ENCODE measurements at regions of chr10 and their contacts with region 1.

Region 1: DNA sequence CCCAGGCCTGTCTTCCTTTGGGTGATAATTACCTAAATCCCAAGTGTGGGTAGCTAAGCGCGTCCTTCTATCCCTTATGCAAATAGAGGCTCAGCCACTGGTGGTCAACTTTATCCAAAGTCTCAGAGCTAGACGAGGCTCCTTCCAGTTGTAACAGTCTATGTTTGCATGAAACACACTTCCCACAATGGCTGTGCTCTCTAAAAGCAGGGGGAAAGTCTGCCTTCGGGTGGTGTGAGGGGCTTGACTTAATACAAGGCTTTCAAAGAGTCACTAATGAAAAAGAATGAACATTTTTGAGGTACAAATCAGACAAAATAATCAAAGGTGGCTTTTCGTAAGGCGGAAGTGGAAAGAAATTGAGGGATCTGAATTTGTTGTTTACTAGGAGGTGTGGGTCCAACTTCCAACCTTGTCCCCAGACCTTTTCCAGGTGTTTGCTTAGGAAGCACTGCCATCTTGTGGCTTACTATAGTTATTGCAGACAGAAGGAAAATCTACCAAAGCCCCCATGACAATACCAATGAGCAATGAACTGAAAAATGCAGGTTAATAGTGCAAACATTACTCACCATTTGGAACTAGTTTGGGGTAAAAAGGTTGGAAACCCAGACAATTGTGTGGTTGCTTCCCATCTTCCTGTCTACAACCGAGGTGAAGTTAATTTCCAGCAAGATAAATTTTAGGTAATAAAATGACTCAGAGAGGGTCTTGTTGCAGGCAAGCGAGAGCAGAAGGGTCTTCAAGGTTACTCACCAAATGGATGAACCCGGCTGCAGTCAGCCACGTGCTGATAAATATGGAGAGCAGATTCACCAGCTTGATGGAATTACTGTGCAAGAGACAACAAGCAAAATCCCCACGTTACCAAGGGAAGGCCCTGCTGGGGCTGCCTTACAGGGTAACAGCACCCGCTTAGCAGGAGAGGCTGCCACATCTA is 525.7 kb downstream of the KCNMA1 start:
- DNase-seq: peak; percentile 60
- ATAC-seq: peak; percentile 92
- H3K4me3 ChIP-seq: no peak overlapping the region; a peak in 1 of 6 replicates
- H3K27ac ChIP-seq: no peak overlapping the region
- H3K4me1 ChIP-seq: peaks cover 10% of the 10 kb centered on the region; the same call in 1 of the 2 replicates
- H3K27me3 ChIP-seq: peaks cover 0 to 10% of the 10 kb centered on the region in 2 experiments; a peak in 1 of 5 replicates
- CTCF ChIP-seq: peak; percentile 82
- EP300 ChIP-seq: no peak
- POLR2A ChIP-seq: no peak
- RAD21 ChIP-seq: peak; percentile 62

Region 2: GRCh38 chr10:76984559-76985443 is 127.1 kb before region 1 on chr10:
- CTCF ChIA-PET with region 1: no interaction called
- POLR2A ChIA-PET with region 1: no interaction called
- in situ Hi-C with region 1: no loop called
- intact Hi-C with region 1: loop called (anchors 10 kb)
- DNase-seq: peak; percentile 49
- ATAC-seq: peak; percentile 89
- H3K4me3 ChIP-seq: no peak overlapping the region
- H3K27ac ChIP-seq: no peak overlapping the region
- H3K4me1 ChIP-seq: no peaks in the 10 kb centered on the region
- H3K27me3 ChIP-seq: peaks cover 0 to 21% of the 10 kb centered on the region in 2 experiments; a peak in 3 of 5 replicates
- CTCF ChIP-seq: peak; percentile 81
- EP300 ChIP-seq: no peak
- POLR2A ChIP-seq: no peak
- RAD21 ChIP-seq: no peak; the same call in 1 of the 2 replicates

Region 3: GRCh38 chr10:77036993-77037734 is 74.7 kb before region 1 on chr10:
- CTCF ChIA-PET with region 1: no interaction called
- POLR2A ChIA-PET with region 1: no interaction called
- in situ Hi-C with region 1: no loop called
- intact Hi-C with region 1: loop called (anchors 1 kb)
- DNase-seq: peak; percentile 9
- ATAC-seq: peak; percentile 38; the same call in 2 of the 3 replicates
- H3K4me3 ChIP-seq: no peak overlapping the region
- H3K27ac ChIP-seq: no peak overlapping the region
- H3K4me1 ChIP-seq: no peaks in the 10 kb centered on the region
- H3K27me3 ChIP-seq: peaks cover 0 to 9% of the 10 kb centered on the region in 2 experiments; a peak in 1 of 5 replicates
- CTCF ChIP-seq: peak; percentile 30
- EP300 ChIP-seq: no peak
- POLR2A ChIP-seq: no peak
- RAD21 ChIP-seq: no peak

Region 4: DNA sequence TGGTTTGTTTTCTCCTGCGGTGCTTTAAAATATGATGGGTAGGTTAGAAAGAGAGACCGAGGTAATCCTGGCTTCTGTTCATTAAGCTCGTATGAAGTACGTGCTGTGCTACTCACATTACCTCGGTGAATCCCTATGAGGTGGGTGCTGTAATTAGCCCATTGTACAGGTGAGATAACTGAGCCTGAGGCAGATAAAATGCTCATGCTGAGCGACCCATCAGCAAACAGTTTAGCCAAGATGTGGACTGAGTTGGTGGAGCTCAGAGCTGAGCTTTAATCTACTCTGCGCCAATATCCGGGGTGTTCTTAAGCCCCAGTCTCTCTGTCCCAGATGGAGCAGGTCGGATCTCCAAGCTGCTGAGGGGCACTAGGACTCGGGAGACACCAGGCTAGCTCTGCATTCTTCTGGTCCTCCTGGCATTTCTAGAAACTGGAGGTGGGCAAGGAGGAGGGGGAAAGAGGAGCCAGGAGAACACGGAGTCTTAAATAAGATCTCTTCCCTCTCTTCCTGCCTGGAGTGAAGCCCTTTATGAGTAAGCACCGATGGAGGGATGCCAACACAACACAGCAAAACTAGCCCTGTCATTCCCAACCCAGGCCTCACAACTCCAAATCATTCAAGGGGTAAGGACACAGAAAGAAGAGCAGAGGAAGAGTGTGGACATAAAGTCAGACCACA is 67.3 kb after region 1 on chr10:
- CTCF ChIA-PET with region 1: no interaction called
- POLR2A ChIA-PET with region 1: no interaction called
- in situ Hi-C with region 1: no loop called
- intact Hi-C with region 1: no loop called
- DNase-seq: no peak
- ATAC-seq: no peak
- H3K4me3 ChIP-seq: no peak overlapping the region
- H3K27ac ChIP-seq: no peak overlapping the region
- H3K4me1 ChIP-seq: no peaks in the 10 kb centered on the region
- H3K27me3 ChIP-seq: peaks cover 0 to 9% of the 10 kb centered on the region in 2 experiments; a peak in 2 of 5 replicates
- CTCF ChIP-seq: no peak
- EP300 ChIP-seq: no peak
- POLR2A ChIP-seq: no peak
- RAD21 ChIP-seq: no peak

Region 5: GRCh38 chr10:77531441-77532001 is 419.6 kb after region 1 on chr10:
- CTCF ChIA-PET with region 1: no interaction called
- POLR2A ChIA-PET with region 1: no interaction called
- in situ Hi-C with region 1: no loop called
- intact Hi-C with region 1: no loop called
- DNase-seq: no peak
- ATAC-seq: peak; percentile 70; the same call in 2 of the 3 replicates
- H3K4me3 ChIP-seq: no peak overlapping the region
- H3K27ac ChIP-seq: no peak overlapping the region
- H3K4me1 ChIP-seq: 0 out of 2 replicates have a peak, but pooled peaks cover 9% of the 10 kb centered on the region
- H3K27me3 ChIP-seq: peaks cover 1 to 6% of the 10 kb centered on the region in 2 experiments; a peak in 4 of 5 replicates
- CTCF ChIP-seq: no peak
- EP300 ChIP-seq: no peak
- POLR2A ChIP-seq: no peak
- RAD21 ChIP-seq: no peak

Measured in HepG2 (cell line).